Transverse colon (tissue), 4 donors: ENCODE measurements at regions of chr4 and their contacts with region 1.

Region 1: GRCh38 chr4:88975958-88976774 is 80.8 kb downstream of the FAM13A start:
- DNase-seq: no peak
- H3K4me3 ChIP-seq: no peak overlapping the region
- H3K27ac ChIP-seq: peak overlapping the region in 2 of 4 donors; percentile 31 to 46
- H3K4me1 ChIP-seq: peaks cover 0 to 12% (median 9%) of the 10 kb centered on the region in 4 donors
- H3K27me3 ChIP-seq: no peaks in the 10 kb centered on the region
- CTCF ChIP-seq: no peak
- EP300 ChIP-seq: no peak
- POLR2A ChIP-seq: no peak

Region 2: GRCh38 chr4:88320780-88321373 is 655.3 kb before region 1 on chr4:
- in situ Hi-C with region 1: no loop called
- intact Hi-C with region 1: no loop called
- DNase-seq: peak; percentile 38
- H3K4me3 ChIP-seq: no peak overlapping the region
- H3K27ac ChIP-seq: peak overlapping the region in 3 of 4 donors; percentile 4 to 59 (median 33)
- H3K4me1 ChIP-seq: peaks cover 0 to 9% (median 0%) of the 10 kb centered on the region in 4 donors
- H3K27me3 ChIP-seq: no peaks in the 10 kb centered on the region
- CTCF ChIP-seq: no peak
- EP300 ChIP-seq: no peak
- POLR2A ChIP-seq: no peak

Region 3: GRCh38 chr4:88803600-88804096 is 172.5 kb before region 1 on chr4:
- in situ Hi-C with region 1: no loop called
- intact Hi-C with region 1: no loop called
- DNase-seq: peak; percentile 43
- H3K4me3 ChIP-seq: no peak overlapping the region
- H3K27ac ChIP-seq: peak overlapping the region; percentile 53 to 74 (median 60)
- H3K4me1 ChIP-seq: peaks cover 0 to 58% (median 22%) of the 10 kb centered on the region in 4 donors
- H3K27me3 ChIP-seq: no peaks in the 10 kb centered on the region
- CTCF ChIP-seq: no peak
- EP300 ChIP-seq: peak; percentile 67
- POLR2A ChIP-seq: no peak

Region 4: GRCh38 chr4:89024051-89024675 is 48.0 kb after region 1 on chr4:
- in situ Hi-C with region 1: no loop called
- intact Hi-C with region 1: no loop called
- DNase-seq: peak; percentile 60
- H3K4me3 ChIP-seq: no peak overlapping the region
- H3K27ac ChIP-seq: no peak overlapping the region
- H3K4me1 ChIP-seq: peaks cover 0 to 18% (median 3%) of the 10 kb centered on the region in 4 donors
- H3K27me3 ChIP-seq: no peaks in the 10 kb centered on the region
- CTCF ChIP-seq: peak; percentile 77 to 93 (median 82)
- EP300 ChIP-seq: no peak
- POLR2A ChIP-seq: no peak

Region 5: GRCh38 chr4:89039730-89040338 is 63.7 kb after region 1 on chr4:
- in situ Hi-C with region 1: loop called in 1 of 4 experiments (anchors 10 kb)
- intact Hi-C with region 1: no loop called
- DNase-seq: no peak
- H3K4me3 ChIP-seq: no peak overlapping the region
- H3K27ac ChIP-seq: no peak overlapping the region
- H3K4me1 ChIP-seq: no peaks in the 10 kb centered on the region
- H3K27me3 ChIP-seq: no peaks in the 10 kb centered on the region
- CTCF ChIP-seq: no peak
- EP300 ChIP-seq: no peak
- POLR2A ChIP-seq: no peak

Region 6: DNA sequence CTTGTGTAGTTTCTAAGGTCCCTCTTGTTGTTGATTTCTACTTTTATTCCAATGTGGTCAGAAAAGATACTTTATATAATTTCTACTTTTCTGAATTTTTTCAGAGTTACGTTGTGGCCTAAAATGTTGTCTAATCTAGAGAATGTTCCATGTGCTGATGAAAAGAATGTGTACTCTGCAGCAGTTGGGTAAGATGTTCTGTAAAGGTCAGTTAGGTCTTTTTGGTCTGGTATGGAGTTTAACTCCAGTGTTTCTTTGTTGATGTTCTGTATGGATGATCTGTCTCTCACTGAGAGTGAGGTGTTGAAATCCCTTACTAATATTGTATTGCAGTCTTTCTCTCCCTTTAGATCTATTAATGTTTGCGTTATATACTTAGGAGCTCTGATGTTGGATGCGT is 368.4 kb after region 1 on chr4:
- in situ Hi-C with region 1: no loop called
- intact Hi-C with region 1: no loop called
- DNase-seq: no peak
- H3K4me3 ChIP-seq: no peak overlapping the region
- H3K27ac ChIP-seq: no peak overlapping the region
- H3K4me1 ChIP-seq: no peaks in the 10 kb centered on the region
- H3K27me3 ChIP-seq: no peaks in the 10 kb centered on the region
- CTCF ChIP-seq: no peak
- EP300 ChIP-seq: no peak
- POLR2A ChIP-seq: no peak